ENCODE measurements at regions of chr16 and their contacts with region 1.

Region 1: GRCh38 chr16:22692916-22693637 is 120.9 kb upstream of the HS3ST2 start:
- DNase-seq: no peak
- H3K4me3 ChIP-seq: no peak overlapping the region
- H3K27ac ChIP-seq: no peak overlapping the region
- H3K4me1 ChIP-seq: peaks cover 15% of the 10 kb centered on the region
- H3K27me3 ChIP-seq: no peaks in the 10 kb centered on the region
- CTCF ChIP-seq: no peak

Region 2: GRCh38 chr16:21574381-21574780 is 1118.7 kb before region 1 on chr16:
- intact Hi-C with region 1: loop called (anchors 2 kb)
- DNase-seq: no peak
- H3K4me3 ChIP-seq: no peak overlapping the region
- H3K27ac ChIP-seq: no peak overlapping the region
- H3K4me1 ChIP-seq: no peaks in the 10 kb centered on the region
- H3K27me3 ChIP-seq: peaks cover 10% of the 10 kb centered on the region
- CTCF ChIP-seq: no peak

Measured in left ventricle myocardium inferior (tissue), 1 donor.